HepG2 (cell line): ENCODE measurements at regions of chr9 and their contacts with region 1.

Region 1: DNA sequence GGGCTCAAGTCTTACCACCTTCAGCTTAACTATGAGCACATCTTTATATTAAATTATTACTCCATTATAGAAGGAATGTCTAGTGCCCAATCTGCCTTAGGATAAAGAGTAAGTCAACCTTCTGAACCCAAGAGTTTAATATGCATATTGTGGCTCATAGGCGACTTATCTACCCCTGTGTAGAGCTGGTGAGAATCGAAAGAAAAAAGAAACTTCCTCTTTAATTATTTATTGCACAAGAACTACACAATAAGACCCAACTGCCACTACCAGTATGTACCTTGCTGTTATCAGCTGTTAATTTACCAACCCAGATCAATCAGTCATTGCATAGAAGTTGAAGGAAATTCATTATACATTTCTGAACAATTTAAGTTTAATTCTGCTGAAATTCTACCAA is 329.1 kb upstream of the SLC24A2 start:
- DNase-seq: no peak
- ATAC-seq: no peak
- H3K4me3 ChIP-seq: no peak overlapping the region
- H3K27ac ChIP-seq: no peak overlapping the region
- H3K4me1 ChIP-seq: peaks cover 17% of the 10 kb centered on the region
- H3K27me3 ChIP-seq: no peaks in the 10 kb centered on the region
- CTCF ChIP-seq: no peak
- EP300 ChIP-seq: no peak
- POLR2A ChIP-seq: no peak
- RAD21 ChIP-seq: no peak

Region 2: GRCh38 chr9:20044686-20045085 is 73.3 kb before region 1 on chr9:
- CTCF ChIA-PET with region 1: no interaction called
- POLR2A ChIA-PET with region 1: no interaction called
- in situ Hi-C with region 1: no loop called
- intact Hi-C with region 1: no loop called
- DNase-seq: no peak
- ATAC-seq: no peak
- H3K4me3 ChIP-seq: no peak overlapping the region
- H3K27ac ChIP-seq: no peak overlapping the region
- H3K4me1 ChIP-seq: no peaks in the 10 kb centered on the region
- H3K27me3 ChIP-seq: no peaks in the 10 kb centered on the region; a peak in 1 of 5 replicates
- CTCF ChIP-seq: no peak
- EP300 ChIP-seq: no peak
- POLR2A ChIP-seq: no peak
- RAD21 ChIP-seq: no peak

Region 3: GRCh38 chr9:20054734-20055133 is 63.3 kb before region 1 on chr9:
- CTCF ChIA-PET with region 1: no interaction called
- POLR2A ChIA-PET with region 1: no interaction called
- in situ Hi-C with region 1: no loop called
- intact Hi-C with region 1: no loop called
- DNase-seq: no peak
- ATAC-seq: no peak
- H3K4me3 ChIP-seq: no peak overlapping the region
- H3K27ac ChIP-seq: no peak overlapping the region
- H3K4me1 ChIP-seq: no peaks in the 10 kb centered on the region
- H3K27me3 ChIP-seq: no peaks in the 10 kb centered on the region; a peak in 1 of 5 replicates
- CTCF ChIP-seq: no peak
- EP300 ChIP-seq: no peak
- POLR2A ChIP-seq: no peak
- RAD21 ChIP-seq: no peak

Region 4: DNA sequence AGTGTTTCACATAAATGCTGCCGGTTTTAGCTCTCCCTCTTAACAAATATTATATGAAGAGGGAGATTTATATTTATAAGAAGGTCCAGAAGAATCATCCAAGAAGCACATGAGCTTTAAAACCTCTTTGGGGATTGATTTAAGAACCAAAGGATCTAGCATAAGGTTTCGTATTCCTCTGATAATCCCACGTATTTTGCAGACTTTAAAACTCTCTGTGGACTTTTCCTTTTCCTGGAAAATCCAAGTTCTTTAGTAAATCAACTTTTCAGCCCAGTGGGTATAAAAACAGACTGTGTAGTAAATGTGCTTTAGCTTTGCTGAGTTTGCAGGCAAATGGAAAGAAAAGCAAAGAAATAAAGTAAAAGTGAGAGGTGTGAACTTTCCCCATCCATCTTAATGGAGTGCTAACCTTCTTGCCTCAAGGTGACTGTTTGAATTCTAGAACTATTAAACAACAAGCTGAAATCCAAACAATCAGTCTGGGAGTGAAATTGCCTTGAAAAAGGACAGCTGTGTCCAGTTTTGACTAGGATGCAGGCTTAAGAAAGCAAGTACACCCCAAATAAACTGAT is 34.3 kb after region 1 on chr9:
- CTCF ChIA-PET with region 1: no interaction called
- POLR2A ChIA-PET with region 1: no interaction called
- in situ Hi-C with region 1: no loop called
- intact Hi-C with region 1: no loop called
- DNase-seq: no peak
- ATAC-seq: no peak
- H3K4me3 ChIP-seq: no peak overlapping the region
- H3K27ac ChIP-seq: no peak overlapping the region
- H3K4me1 ChIP-seq: no peaks in the 10 kb centered on the region
- H3K27me3 ChIP-seq: no peaks in the 10 kb centered on the region
- CTCF ChIP-seq: no peak
- EP300 ChIP-seq: no peak
- POLR2A ChIP-seq: no peak
- RAD21 ChIP-seq: no peak

Region 5: DNA sequence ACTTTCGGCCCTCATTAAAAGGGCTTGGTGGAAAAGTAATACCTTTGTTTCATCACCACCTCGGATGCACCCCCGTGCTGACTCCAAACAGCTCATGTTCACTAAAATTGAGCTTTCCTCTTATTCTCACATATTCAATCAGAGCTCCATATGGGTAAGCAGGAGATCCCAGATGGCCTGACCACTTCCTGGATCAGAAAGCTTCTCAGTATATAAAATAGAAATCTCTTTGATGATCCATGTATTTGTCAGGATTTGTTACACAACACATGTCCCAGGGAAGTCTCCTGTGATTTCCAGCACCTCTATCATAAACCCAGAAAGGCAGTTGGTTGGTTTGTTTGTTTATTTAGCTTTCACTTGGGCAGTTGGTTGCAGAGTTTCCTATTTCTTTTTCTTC is 102.3 kb after region 1 on chr9:
- CTCF ChIA-PET with region 1: no interaction called
- POLR2A ChIA-PET with region 1: no interaction called
- in situ Hi-C with region 1: no loop called
- intact Hi-C with region 1: no loop called
- DNase-seq: no peak
- ATAC-seq: no peak
- H3K4me3 ChIP-seq: no peak overlapping the region
- H3K27ac ChIP-seq: no peak overlapping the region
- H3K4me1 ChIP-seq: no peaks in the 10 kb centered on the region
- H3K27me3 ChIP-seq: no peaks in the 10 kb centered on the region
- CTCF ChIP-seq: no peak
- EP300 ChIP-seq: no peak
- POLR2A ChIP-seq: no peak
- RAD21 ChIP-seq: no peak

Region 6: GRCh38 chr9:20754556-20754955 is 636.6 kb after region 1 on chr9:
- CTCF ChIA-PET with region 1: no interaction called
- POLR2A ChIA-PET with region 1: no interaction called
- in situ Hi-C with region 1: no loop called
- intact Hi-C with region 1: loop called (anchors 5 kb)
- DNase-seq: no peak
- ATAC-seq: no peak
- H3K4me3 ChIP-seq: no peak overlapping the region
- H3K27ac ChIP-seq: no peak overlapping the region
- H3K4me1 ChIP-seq: no peaks in the 10 kb centered on the region
- H3K27me3 ChIP-seq: no peaks in the 10 kb centered on the region
- CTCF ChIP-seq: no peak
- EP300 ChIP-seq: no peak
- POLR2A ChIP-seq: no peak
- RAD21 ChIP-seq: no peak